ENCODE measurements at regions of chr11 and their contacts with region 1.

Region 1: GRCh38 chr11:128522055-128522942 is 65.1 kb downstream of the ETS1 start:
- DNase-seq: peak; percentile 59
- ATAC-seq: peak; percentile 85
- H3K4me3 ChIP-seq: peak overlapping the region; percentile 96
- H3K27ac ChIP-seq: peak overlapping the region; percentile 96
- H3K4me1 ChIP-seq: peaks cover 17% of the 10 kb centered on the region
- H3K27me3 ChIP-seq: no peaks in the 10 kb centered on the region
- CTCF ChIP-seq: no peak
- EP300 ChIP-seq: no peak
- POLR2A ChIP-seq: peak; percentile 97
- RAD21 ChIP-seq: 0 out of 2 replicates have a peak, but pooled peaks have one; percentile 9

Region 2: GRCh38 chr11:128302425-128303186 is 219.7 kb before region 1 on chr11:
- CTCF ChIA-PET with region 1: no interaction called
- POLR2A ChIA-PET with region 1: interaction called, 4 read pairs
- RAD21 ChIA-PET with region 1: interaction called, 12 read pairs
- SMC1A ChIA-PET with region 1: interaction called, 10 read pairs
- in situ Hi-C with region 1: no loop called
- intact Hi-C with region 1: no loop called
- DNase-seq: peak; percentile 82
- ATAC-seq: peak; percentile 89
- H3K4me3 ChIP-seq: no peak overlapping the region
- H3K27ac ChIP-seq: peak overlapping the region; percentile 35; the same call in 1 of the 2 replicates
- H3K4me1 ChIP-seq: peaks cover 62% of the 10 kb centered on the region
- H3K27me3 ChIP-seq: no peaks in the 10 kb centered on the region
- CTCF ChIP-seq: 0 out of 6 replicates have a peak, but pooled peaks of 1 of the 3 experiments have one; percentile 11
- EP300 ChIP-seq: peak; percentile 6 to 8; a peak in 1 of 4 replicates
- POLR2A ChIP-seq: no peak
- RAD21 ChIP-seq: no peak

Region 3: GRCh38 chr11:128412847-128413791 is 109.2 kb before region 1 on chr11:
- CTCF ChIA-PET with region 1: interaction called, 3 read pairs
- POLR2A ChIA-PET with region 1: interaction called, 4 read pairs
- RAD21 ChIA-PET with region 1: interaction called, 27 read pairs
- SMC1A ChIA-PET with region 1: interaction called, 13 read pairs
- in situ Hi-C with region 1: no loop called
- intact Hi-C with region 1: loop called (anchors 2 kb)
- DNase-seq: peak; percentile 82
- ATAC-seq: peak; percentile 76
- H3K4me3 ChIP-seq: peak overlapping the region; percentile 47; the same call in 1 of the 2 replicates
- H3K27ac ChIP-seq: peak overlapping the region; percentile 75
- H3K4me1 ChIP-seq: peaks cover 6% of the 10 kb centered on the region
- H3K27me3 ChIP-seq: no peaks in the 10 kb centered on the region
- CTCF ChIP-seq: no peak
- EP300 ChIP-seq: peak; percentile 45 to 76; a peak in 2 of 4 replicates
- POLR2A ChIP-seq: no peak
- RAD21 ChIP-seq: no peak

Region 4: GRCh38 chr11:128482512-128483191 is 39.6 kb before region 1 on chr11:
- CTCF ChIA-PET with region 1: interaction called, 18 read pairs
- POLR2A ChIA-PET with region 1: interaction called, 8 read pairs
- RAD21 ChIA-PET with region 1: interaction called, 144 read pairs
- SMC1A ChIA-PET with region 1: interaction called, 154 read pairs
- in situ Hi-C with region 1: no loop called
- intact Hi-C with region 1: loop called (anchors 2 kb)
- DNase-seq: no peak
- ATAC-seq: peak; percentile 81
- H3K4me3 ChIP-seq: peak overlapping the region; percentile 37
- H3K27ac ChIP-seq: peak overlapping the region; percentile 97
- H3K4me1 ChIP-seq: peaks cover 42% of the 10 kb centered on the region
- H3K27me3 ChIP-seq: no peaks in the 10 kb centered on the region
- CTCF ChIP-seq: no peak
- EP300 ChIP-seq: peak in 1 of 2 experiments; percentile 44; a peak in 1 of 4 replicates
- POLR2A ChIP-seq: peak; percentile 64
- RAD21 ChIP-seq: 0 out of 2 replicates have a peak, but pooled peaks have one; percentile 1

Region 5: GRCh38 chr11:128506999-128507611 is 15.2 kb before region 1 on chr11:
- CTCF ChIA-PET with region 1: interaction called, 24 read pairs
- POLR2A ChIA-PET with region 1: interaction called, 9 read pairs
- RAD21 ChIA-PET with region 1: interaction called, 16 read pairs
- SMC1A ChIA-PET with region 1: interaction called, 82 read pairs
- in situ Hi-C with region 1: no loop called
- intact Hi-C with region 1: no loop called
- DNase-seq: no peak
- ATAC-seq: peak; percentile 36
- H3K4me3 ChIP-seq: peak overlapping the region; percentile 25; the same call in 1 of the 2 replicates
- H3K27ac ChIP-seq: peak overlapping the region; percentile 54
- H3K4me1 ChIP-seq: peaks cover 46% of the 10 kb centered on the region
- H3K27me3 ChIP-seq: no peaks in the 10 kb centered on the region
- CTCF ChIP-seq: no peak
- EP300 ChIP-seq: no peak
- POLR2A ChIP-seq: no peak; the same call in 1 of the 2 replicates
- RAD21 ChIP-seq: no peak

Region 6: DNA sequence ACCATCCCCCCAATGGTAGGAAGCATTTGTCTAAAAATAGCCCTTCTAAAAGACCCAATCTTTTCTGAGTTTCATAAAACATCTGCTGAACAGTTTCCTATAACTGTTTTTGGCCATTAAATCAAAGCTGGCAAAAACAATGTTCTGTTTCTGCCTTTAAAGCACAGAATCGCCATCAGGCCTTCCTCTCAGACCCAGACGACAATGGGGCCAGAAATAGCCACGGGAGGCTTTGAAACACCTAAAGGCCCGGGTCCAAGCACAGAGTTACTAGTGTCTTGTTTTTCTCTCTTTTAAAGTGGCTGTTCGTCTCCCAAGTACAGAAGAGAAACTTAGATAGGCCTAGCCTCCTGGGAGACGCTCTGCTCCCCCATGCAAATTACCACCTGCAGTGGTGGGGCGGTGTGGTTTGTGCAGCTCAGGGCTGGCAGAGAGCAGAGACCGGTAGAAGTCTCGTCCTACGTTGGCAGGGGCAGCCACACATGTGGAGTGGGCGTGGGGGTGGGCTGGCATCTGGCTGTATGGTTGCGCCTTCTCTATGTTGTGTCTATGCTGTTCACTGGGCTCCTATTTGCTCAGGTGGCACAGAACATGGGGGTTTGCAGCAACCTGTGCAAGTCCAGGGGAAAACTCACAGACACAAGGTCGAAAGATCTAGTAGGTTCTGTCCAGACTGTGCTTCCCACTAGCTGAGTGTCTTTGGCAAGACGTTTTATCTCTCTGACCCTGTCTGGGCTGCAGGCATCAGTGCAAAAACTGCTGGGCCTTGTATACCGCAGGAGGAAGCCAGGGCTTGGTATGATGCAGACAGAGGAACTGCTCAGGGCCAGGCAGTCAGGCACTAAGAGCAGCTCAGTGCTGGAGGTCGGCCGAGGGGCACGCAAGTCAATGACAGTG is 88.7 kb after region 1 on chr11:
- CTCF ChIA-PET with region 1: interaction called, 6 read pairs
- POLR2A ChIA-PET with region 1: interaction called, 4 read pairs
- RAD21 ChIA-PET with region 1: interaction called, 11 read pairs
- SMC1A ChIA-PET with region 1: interaction called, 8 read pairs
- in situ Hi-C with region 1: no loop called
- intact Hi-C with region 1: loop called (anchors 5 kb)
- DNase-seq: peak; percentile 93
- ATAC-seq: peak; percentile 97
- H3K4me3 ChIP-seq: peak overlapping the region; percentile 55
- H3K27ac ChIP-seq: peak overlapping the region; percentile 98
- H3K4me1 ChIP-seq: peaks cover 36% of the 10 kb centered on the region
- H3K27me3 ChIP-seq: no peaks in the 10 kb centered on the region
- CTCF ChIP-seq: no peak
- EP300 ChIP-seq: peak; percentile 42 to 86; a peak in 3 of 4 replicates
- POLR2A ChIP-seq: peak; percentile 69
- RAD21 ChIP-seq: no peak; the same call in 1 of the 2 replicates

Region 7: DNA sequence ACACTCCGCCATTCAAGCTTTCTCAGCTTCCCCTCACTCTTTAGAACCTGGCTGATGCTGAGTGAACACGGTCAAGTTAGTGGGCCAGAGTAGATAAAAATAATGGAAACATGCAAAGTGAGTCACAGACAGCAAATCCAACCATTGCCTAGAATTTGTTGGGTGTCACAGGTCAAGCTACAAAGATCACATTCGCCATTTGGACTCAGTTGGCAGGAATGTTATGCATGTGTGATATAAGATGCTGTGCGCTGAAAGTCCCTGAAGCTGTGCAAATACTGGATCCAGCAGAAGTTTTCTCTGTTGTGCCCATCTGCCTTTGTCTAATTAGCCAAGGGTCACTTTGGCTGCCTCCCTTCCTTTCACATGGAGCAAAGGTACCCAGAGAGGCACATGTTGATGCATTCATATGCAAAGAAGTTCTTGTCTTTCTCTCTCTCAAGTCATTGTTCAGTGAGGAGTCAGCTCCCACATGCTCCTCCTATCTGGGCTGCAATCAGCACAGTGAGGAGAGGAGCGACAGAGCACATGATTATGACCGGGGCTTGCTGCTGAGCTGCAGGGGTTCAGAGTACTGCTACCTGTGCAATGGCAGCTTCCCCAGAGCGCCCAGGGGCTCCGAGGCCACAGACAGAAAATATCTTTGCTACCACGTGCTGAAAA is 211.3 kb after region 1 on chr11:
- CTCF ChIA-PET with region 1: interaction called, 3 read pairs
- POLR2A ChIA-PET with region 1: no interaction called
- RAD21 ChIA-PET with region 1: interaction called, 9 read pairs
- SMC1A ChIA-PET with region 1: interaction called, 3 read pairs
- in situ Hi-C with region 1: no loop called
- intact Hi-C with region 1: loop called (anchors 5 kb)
- DNase-seq: no peak
- ATAC-seq: peak; percentile 55
- H3K4me3 ChIP-seq: peak overlapping the region; percentile 24; the same call in 1 of the 2 replicates
- H3K27ac ChIP-seq: peak overlapping the region; percentile 91
- H3K4me1 ChIP-seq: peaks cover 89% of the 10 kb centered on the region
- H3K27me3 ChIP-seq: no peaks in the 10 kb centered on the region
- CTCF ChIP-seq: no peak
- EP300 ChIP-seq: no peak
- POLR2A ChIP-seq: 0 out of 2 replicates have a peak, but pooled peaks have one; percentile 31
- RAD21 ChIP-seq: no peak

Region 8: GRCh38 chr11:128765571-128766549 is 243.6 kb after region 1 on chr11:
- CTCF ChIA-PET with region 1: no interaction called
- POLR2A ChIA-PET with region 1: no interaction called
- RAD21 ChIA-PET with region 1: no interaction called
- SMC1A ChIA-PET with region 1: no interaction called
- in situ Hi-C with region 1: no loop called
- intact Hi-C with region 1: no loop called
- DNase-seq: no peak
- ATAC-seq: no peak
- H3K4me3 ChIP-seq: no peak overlapping the region
- H3K27ac ChIP-seq: no peak overlapping the region
- H3K4me1 ChIP-seq: no peaks in the 10 kb centered on the region
- H3K27me3 ChIP-seq: no peaks in the 10 kb centered on the region
- CTCF ChIP-seq: no peak
- EP300 ChIP-seq: no peak
- POLR2A ChIP-seq: no peak
- RAD21 ChIP-seq: no peak